Posterior cingulate gyrus (tissue), 11 donors: ENCODE measurements at regions of chr19 and their contacts with region 1.

Region 1: GRCh38 chr19:58326914-58327726 is at the start of gene ZSCAN22:
- DNase-seq: peak; percentile 97 to 99 (median 98)

Region 2: GRCh38 chr19:58268344-58268743 is 58.8 kb before region 1 on chr19:
- intact Hi-C with region 1: no loop called
- DNase-seq: no peak

Region 3: GRCh38 chr19:58278157-58279041 is 48.7 kb before region 1 on chr19 and contains the start of gene ZNF8:
- intact Hi-C with region 1: loop called (anchors 2 kb)
- DNase-seq: peak; percentile 95 to 99 (median 96)

Region 4: DNA sequence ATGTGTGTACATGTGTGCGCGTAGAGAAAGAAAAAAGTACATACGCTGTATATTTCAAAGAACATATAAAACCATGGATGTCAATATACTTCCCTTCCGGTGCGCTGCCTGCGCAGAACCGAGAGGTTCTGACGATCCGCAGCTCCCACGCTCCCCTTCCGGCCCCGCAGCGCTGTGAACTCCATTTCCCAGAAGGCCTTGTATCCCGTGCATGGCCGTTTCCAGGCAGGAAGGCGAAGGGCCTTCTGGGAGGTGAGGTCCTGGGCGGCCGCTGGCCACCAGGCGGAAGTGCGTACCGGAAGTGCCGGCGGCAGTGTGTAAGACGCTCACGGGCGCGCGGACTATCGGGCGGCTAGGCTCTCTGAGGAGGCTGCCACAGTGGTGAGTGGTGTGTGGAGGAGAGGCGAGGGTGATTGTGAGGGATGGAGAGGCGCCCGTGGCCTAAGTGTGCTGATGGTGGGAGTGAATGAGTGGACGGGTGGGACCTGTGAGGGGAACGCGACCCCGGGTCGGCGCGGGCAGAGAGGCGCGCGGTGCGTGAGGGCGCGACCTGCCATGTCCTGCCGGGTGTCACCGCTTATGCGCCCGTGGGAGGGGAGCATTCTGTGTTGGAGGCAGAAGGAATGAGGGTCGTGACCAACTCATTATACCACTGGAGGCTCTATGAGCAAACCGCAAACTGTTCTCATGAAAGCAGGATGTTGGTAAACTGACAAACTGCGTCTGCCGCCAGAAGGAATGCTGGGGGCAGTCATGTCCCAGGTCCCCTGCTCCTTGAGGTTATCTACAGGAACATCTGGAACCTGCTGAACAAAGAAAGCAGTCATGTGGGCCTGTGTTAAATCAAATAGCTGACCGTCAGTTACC is 21.8 kb before region 1 on chr19 and contains the start of gene ERVK3-1:
- intact Hi-C with region 1: loop called (anchors 2 kb)
- DNase-seq: peak; percentile 94 to 100 (median 96)

Region 5: GRCh38 chr19:58362272-58362994 is 35.3 kb after region 1 on chr19 and contains the start of gene ZNF497:
- intact Hi-C with region 1: loop called (anchors 1 kb)
- DNase-seq: peak; percentile 94 to 100 (median 96)

Region 6: GRCh38 chr19:58380722-58381466 is 53.8 kb after region 1 on chr19 and contains the start of gene ZNF837:
- intact Hi-C with region 1: loop called (anchors 1 kb)
- DNase-seq: peak; percentile 96 to 100 (median 98)

Region 7: DNA sequence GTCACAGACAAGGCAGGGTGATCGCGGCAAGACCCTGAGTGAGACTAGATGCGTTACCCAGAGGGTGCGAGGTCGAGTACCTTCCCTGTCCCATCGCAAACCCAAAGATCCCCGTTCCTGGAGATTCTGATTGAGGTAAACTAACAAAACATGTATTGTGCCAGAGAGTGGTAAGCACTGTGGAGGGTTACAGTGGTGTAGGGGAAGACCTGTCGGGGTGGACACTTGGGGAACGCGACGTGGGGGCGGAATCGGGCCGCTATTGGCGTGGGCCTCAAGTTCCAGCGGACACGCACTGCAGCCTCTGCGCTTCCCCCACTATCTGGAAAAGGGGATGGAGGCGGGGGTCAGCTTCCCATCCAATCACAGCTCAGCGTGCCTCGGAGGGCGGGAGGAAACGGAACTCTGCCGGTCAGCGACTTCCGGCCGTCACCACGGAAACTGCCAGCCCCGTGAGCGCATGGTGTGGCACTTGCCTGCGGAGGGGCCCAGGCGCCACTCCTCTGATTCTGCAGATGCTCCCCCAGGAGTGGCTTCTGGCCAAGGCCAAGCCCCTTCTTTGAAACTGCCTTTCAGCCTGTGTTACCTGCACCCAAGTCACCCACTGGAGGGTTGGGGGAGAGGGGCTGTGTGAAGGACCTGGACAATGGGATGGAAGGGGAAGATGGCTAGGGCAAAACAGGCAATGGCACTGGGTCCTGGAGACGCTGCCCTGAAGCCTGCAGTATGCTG is 232.3 kb after region 1 on chr19:
- intact Hi-C with region 1: no loop called
- DNase-seq: peak; percentile 84 to 98 (median 91)